CD4-positive, alpha-beta memory T cell (primary cell): ENCODE measurements at regions of chr17 and their contacts with region 1.

Region 1: DNA sequence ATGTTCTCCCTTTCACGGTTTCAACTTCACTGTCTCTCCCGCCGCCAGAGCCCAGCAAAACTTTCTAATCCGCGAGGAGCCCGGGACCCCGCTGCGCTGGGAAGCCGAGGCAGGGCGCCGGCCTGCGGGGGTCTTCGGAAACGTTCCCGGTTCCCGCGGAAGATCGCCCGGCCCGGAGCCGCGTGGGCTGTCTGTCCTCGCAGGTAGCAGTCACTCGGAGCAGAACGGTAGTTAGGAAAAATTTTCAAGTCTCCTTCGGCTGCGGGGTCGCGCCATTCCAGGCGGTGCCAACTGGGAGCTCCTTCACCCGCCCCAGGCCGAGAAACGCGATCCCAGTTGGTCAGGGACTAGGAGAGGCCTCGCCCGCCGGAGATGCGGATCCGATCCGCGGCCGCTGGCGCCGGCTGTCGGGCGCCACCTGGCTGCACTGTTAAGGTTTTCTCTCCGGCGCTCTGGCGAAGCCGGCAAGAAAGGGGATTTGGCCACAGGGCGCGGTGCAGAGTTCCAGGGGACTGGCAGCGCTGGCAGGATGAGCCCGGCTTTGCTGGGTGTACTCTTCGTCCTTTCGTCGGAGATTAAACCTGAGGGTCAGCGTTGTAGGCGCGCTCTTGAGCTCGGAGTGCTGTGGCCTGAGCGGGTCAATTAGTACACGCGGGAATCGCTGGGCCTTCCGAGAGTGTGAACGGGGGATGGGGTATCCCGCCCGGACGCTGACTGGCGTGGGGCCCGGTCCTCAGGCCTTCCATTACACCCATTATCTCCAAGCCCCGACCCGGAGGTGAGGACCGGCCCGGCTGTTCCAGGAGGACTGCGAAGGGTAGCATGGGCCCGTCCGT is 135.4 kb downstream of the KCNJ12 start:
- DNase-seq: peak; percentile 48 to 62 (median 55)
- H3K4me3 ChIP-seq: peak overlapping the region in 1 of 2 donors; percentile 48
- H3K4me3 Mint-ChIP-seq: peak overlapping the region; percentile 26 to 77 (median 73)
- H3K27ac ChIP-seq: peak overlapping the region; percentile 15
- H3K27ac Mint-ChIP-seq: peak overlapping the region in 2 of 7 donors; percentile 0 to 13
- H3K4me1 ChIP-seq: peaks cover 4% of the 10 kb centered on the region
- H3K4me1 Mint-ChIP-seq: peaks cover 5 to 11% (median 9%) of the 10 kb centered on the region in 4 donors
- H3K27me3 ChIP-seq: peaks cover 8% of the 10 kb centered on the region
- H3K27me3 Mint-ChIP-seq: peaks cover 17 to 21% of the 10 kb centered on the region in 2 donors

Region 2: GRCh38 chr17:20800146-20800545 is 711.4 kb before region 1 on chr17:
- CTCF ChIA-PET with region 1: no interaction called
- POLR2A ChIA-PET with region 1: no interaction called
- intact Hi-C with region 1: loop called (anchors 5 kb)
- DNase-seq: no peak
- H3K4me3 ChIP-seq: no peak overlapping the region
- H3K4me3 Mint-ChIP-seq: no peak overlapping the region
- H3K27ac ChIP-seq: no peak overlapping the region
- H3K27ac Mint-ChIP-seq: no peak overlapping the region
- H3K4me1 ChIP-seq: no peaks in the 10 kb centered on the region
- H3K4me1 Mint-ChIP-seq: peaks cover 4 to 6% (median 5%) of the 10 kb centered on the region in 4 donors
- H3K27me3 ChIP-seq: no peaks in the 10 kb centered on the region
- H3K27me3 Mint-ChIP-seq: peaks cover 4% of the 10 kb centered on the region in 2 donors

Region 3: DNA sequence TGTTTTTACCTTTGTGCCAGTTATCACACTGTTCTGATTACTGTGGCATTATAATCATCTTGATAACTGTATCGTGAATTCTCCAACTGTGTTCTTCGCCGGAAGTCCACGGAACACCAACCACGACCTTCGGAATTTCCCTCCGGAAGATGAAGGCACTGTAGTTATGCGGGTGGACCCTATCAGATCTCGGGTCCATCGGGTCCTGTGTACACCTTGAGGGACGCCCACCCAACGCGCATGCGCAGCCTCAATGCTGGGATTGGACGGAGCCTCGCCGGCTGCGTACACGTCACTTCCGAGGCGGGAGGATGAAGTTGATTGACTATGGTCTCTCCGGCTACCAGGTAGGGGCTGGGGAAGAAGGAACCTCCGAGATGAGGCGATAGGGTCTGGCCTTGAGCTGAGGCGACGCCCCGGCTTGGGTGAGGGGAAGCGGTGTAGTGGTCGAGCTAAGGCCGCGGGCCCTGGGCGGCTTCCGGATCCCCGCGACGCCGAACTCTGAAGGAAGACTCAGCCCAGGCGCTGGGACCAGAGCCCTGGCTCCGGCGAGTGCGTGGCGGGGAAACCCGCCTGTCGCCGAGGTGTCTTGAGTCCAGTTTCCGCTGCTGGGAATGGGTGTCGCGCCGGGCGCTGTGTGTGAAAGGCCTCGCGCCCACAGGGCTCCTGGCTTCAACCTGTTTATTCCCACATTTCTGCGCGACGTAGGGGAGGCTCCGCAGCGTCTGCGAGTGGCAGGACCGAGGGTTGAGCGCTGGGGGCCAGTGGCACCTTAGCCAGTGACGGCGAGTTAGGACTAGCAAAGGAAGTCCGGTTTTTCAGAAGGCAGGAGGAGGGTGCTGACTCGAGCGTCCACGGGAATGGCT is 384.7 kb before region 1 on chr17 and contains the start of gene DHRS7B:
- CTCF ChIA-PET with region 1: interaction called, 180 read pairs
- POLR2A ChIA-PET with region 1: interaction called, 3 read pairs
- intact Hi-C with region 1: no loop called
- DNase-seq: peak; percentile 94 to 97 (median 94)
- H3K4me3 ChIP-seq: peak within 1 kb of the TSS; percentile 31 to 97
- H3K4me3 Mint-ChIP-seq: peak within 1 kb of the TSS; percentile 91 to 98 (median 96)
- H3K27ac ChIP-seq: peak within 1 kb of the TSS; percentile 85
- H3K27ac Mint-ChIP-seq: peak within 1 kb of the TSS; percentile 95 to 99 (median 97)
- H3K4me1 ChIP-seq: peaks cover 27% of the 10 kb centered on the region
- H3K4me1 Mint-ChIP-seq: peaks cover 20 to 42% (median 35%) of the 10 kb centered on the region in 4 donors
- H3K27me3 ChIP-seq: no peaks in the 10 kb centered on the region
- H3K27me3 Mint-ChIP-seq: no peaks in the 10 kb centered on the region
- total RNA-seq, gene DHRS7B: 8.2 to 9.5 TPM

Region 4: GRCh38 chr17:21318439-21318838 is 193.1 kb before region 1 on chr17:
- CTCF ChIA-PET with region 1: interaction called, 11 read pairs
- POLR2A ChIA-PET with region 1: no interaction called
- intact Hi-C with region 1: loop called (anchors 5 kb)
- DNase-seq: no peak
- H3K4me3 ChIP-seq: no peak overlapping the region
- H3K4me3 Mint-ChIP-seq: no peak overlapping the region
- H3K27ac ChIP-seq: no peak overlapping the region
- H3K27ac Mint-ChIP-seq: peak overlapping the region in 1 of 7 donors; percentile 74
- H3K4me1 ChIP-seq: no peaks in the 10 kb centered on the region
- H3K4me1 Mint-ChIP-seq: peaks cover 4 to 8% (median 6%) of the 10 kb centered on the region in 4 donors
- H3K27me3 ChIP-seq: no peaks in the 10 kb centered on the region
- H3K27me3 Mint-ChIP-seq: no peaks in the 10 kb centered on the region

Region 5: GRCh38 chr17:21482189-21482865 is 29.3 kb before region 1 on chr17:
- CTCF ChIA-PET with region 1: no interaction called
- POLR2A ChIA-PET with region 1: no interaction called
- intact Hi-C with region 1: no loop called
- DNase-seq: no peak
- H3K4me3 ChIP-seq: no peak overlapping the region
- H3K4me3 Mint-ChIP-seq: no peak overlapping the region
- H3K27ac ChIP-seq: no peak overlapping the region
- H3K27ac Mint-ChIP-seq: no peak overlapping the region
- H3K4me1 ChIP-seq: no peaks in the 10 kb centered on the region
- H3K4me1 Mint-ChIP-seq: peaks cover 0 to 2% (median 0%) of the 10 kb centered on the region in 4 donors
- H3K27me3 ChIP-seq: no peaks in the 10 kb centered on the region
- H3K27me3 Mint-ChIP-seq: peaks cover 35 to 37% of the 10 kb centered on the region in 2 donors

Region 6: GRCh38 chr17:21532763-21533385 is 21.3 kb after region 1 on chr17:
- CTCF ChIA-PET with region 1: interaction called, 13 read pairs
- POLR2A ChIA-PET with region 1: no interaction called
- intact Hi-C with region 1: no loop called
- DNase-seq: no peak
- H3K4me3 ChIP-seq: no peak overlapping the region
- H3K4me3 Mint-ChIP-seq: peak overlapping the region in 1 of 8 donors; percentile 6
- H3K27ac ChIP-seq: no peak overlapping the region
- H3K27ac Mint-ChIP-seq: no peak overlapping the region
- H3K4me1 ChIP-seq: peaks cover 8% of the 10 kb centered on the region
- H3K4me1 Mint-ChIP-seq: peaks cover 0 to 5% (median 2%) of the 10 kb centered on the region in 4 donors
- H3K27me3 ChIP-seq: no peaks in the 10 kb centered on the region
- H3K27me3 Mint-ChIP-seq: no peaks in the 10 kb centered on the region

Region 7: DNA sequence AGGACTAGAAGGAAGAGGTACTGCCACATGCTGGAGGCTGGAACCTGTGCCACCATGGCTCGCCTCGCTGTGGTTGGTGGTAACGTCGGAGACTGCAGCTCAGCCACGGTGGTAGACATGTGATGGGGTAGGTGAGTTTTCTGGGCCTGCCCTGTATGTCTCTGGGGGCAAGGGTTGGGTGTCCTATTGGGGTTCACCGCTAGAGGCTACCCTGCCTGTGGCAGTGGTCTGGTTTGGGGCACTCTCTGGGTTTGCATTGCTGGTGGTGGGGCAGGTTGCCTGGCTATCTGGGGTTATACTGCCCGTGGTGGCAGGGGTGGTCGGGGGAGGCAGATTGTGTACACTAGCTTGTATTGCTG is 101.5 kb after region 1 on chr17:
- CTCF ChIA-PET with region 1: no interaction called
- POLR2A ChIA-PET with region 1: no interaction called
- intact Hi-C with region 1: no loop called
- DNase-seq: no peak
- H3K4me3 ChIP-seq: no peak overlapping the region
- H3K4me3 Mint-ChIP-seq: no peak overlapping the region
- H3K27ac ChIP-seq: no peak overlapping the region
- H3K27ac Mint-ChIP-seq: no peak overlapping the region
- H3K4me1 ChIP-seq: no peaks in the 10 kb centered on the region
- H3K4me1 Mint-ChIP-seq: no peaks in the 10 kb centered on the region
- H3K27me3 ChIP-seq: no peaks in the 10 kb centered on the region
- H3K27me3 Mint-ChIP-seq: peaks cover 6% of the 10 kb centered on the region in 2 donors